ENCODE measurements at regions of chr7 and their contacts with region 1.

Region 1: GRCh38 chr7:105304040-105304895 is 84.5 kb downstream of the SRPK2 start:
- DNase-seq: no peak
- ATAC-seq: no peak
- H3K4me3 ChIP-seq: no peak overlapping the region
- H3K4me3 Mint-ChIP-seq: no peak overlapping the region
- H3K27ac ChIP-seq: no peak overlapping the region
- H3K27ac Mint-ChIP-seq: peak overlapping the region in 5 of 9 donors; percentile 31 to 48 (median 43)
- H3K4me1 ChIP-seq: peaks cover 9 to 19% of the 10 kb centered on the region in 2 donors
- H3K4me1 Mint-ChIP-seq: peaks cover 31 to 82% (median 72%) of the 10 kb centered on the region in 7 donors
- H3K27me3 ChIP-seq: no peaks in the 10 kb centered on the region
- H3K27me3 Mint-ChIP-seq: no peaks in the 10 kb centered on the region

Region 2: GRCh38 chr7:105315357-105315756 is 11.1 kb after region 1 on chr7:
- CTCF ChIA-PET with region 1: no interaction called
- POLR2A ChIA-PET with region 1: no interaction called
- intact Hi-C with region 1: loop called in 1 of 2 experiments (anchors 1 kb)
- DNase-seq: no peak
- ATAC-seq: no peak
- H3K4me3 ChIP-seq: no peak overlapping the region
- H3K4me3 Mint-ChIP-seq: no peak overlapping the region
- H3K27ac ChIP-seq: no peak overlapping the region
- H3K27ac Mint-ChIP-seq: peak overlapping the region in 1 of 9 donors; percentile 40
- H3K4me1 ChIP-seq: no peaks in the 10 kb centered on the region
- H3K4me1 Mint-ChIP-seq: peaks cover 0 to 69% (median 47%) of the 10 kb centered on the region in 7 donors
- H3K27me3 ChIP-seq: no peaks in the 10 kb centered on the region
- H3K27me3 Mint-ChIP-seq: no peaks in the 10 kb centered on the region

Region 3: GRCh38 chr7:105439174-105439893 is 135.1 kb after region 1 on chr7:
- CTCF ChIA-PET with region 1: no interaction called
- POLR2A ChIA-PET with region 1: no interaction called
- intact Hi-C with region 1: no loop called
- DNase-seq: no peak
- ATAC-seq: no peak
- H3K4me3 ChIP-seq: no peak overlapping the region
- H3K4me3 Mint-ChIP-seq: no peak overlapping the region
- H3K27ac ChIP-seq: no peak overlapping the region
- H3K27ac Mint-ChIP-seq: peak overlapping the region in 1 of 9 donors; percentile 30
- H3K4me1 ChIP-seq: no peaks in the 10 kb centered on the region
- H3K4me1 Mint-ChIP-seq: peaks cover 0 to 4% (median 0%) of the 10 kb centered on the region in 7 donors
- H3K27me3 ChIP-seq: no peaks in the 10 kb centered on the region
- H3K27me3 Mint-ChIP-seq: no peaks in the 10 kb centered on the region